ENCODE measurements at regions of chr1 and their contacts with region 1.

Region 1: GRCh38 chr1:241531195-241532161 is 700 bp upstream of the KMO start:
- DNase-seq: no peak
- ATAC-seq: peak; percentile 79
- H3K4me3 ChIP-seq: peak overlapping the region; percentile 54 to 64
- H3K27ac ChIP-seq: no peak overlapping the region
- H3K4me1 ChIP-seq: no peaks in the 10 kb centered on the region
- H3K27me3 ChIP-seq: no peaks in the 10 kb centered on the region

Region 2: DNA sequence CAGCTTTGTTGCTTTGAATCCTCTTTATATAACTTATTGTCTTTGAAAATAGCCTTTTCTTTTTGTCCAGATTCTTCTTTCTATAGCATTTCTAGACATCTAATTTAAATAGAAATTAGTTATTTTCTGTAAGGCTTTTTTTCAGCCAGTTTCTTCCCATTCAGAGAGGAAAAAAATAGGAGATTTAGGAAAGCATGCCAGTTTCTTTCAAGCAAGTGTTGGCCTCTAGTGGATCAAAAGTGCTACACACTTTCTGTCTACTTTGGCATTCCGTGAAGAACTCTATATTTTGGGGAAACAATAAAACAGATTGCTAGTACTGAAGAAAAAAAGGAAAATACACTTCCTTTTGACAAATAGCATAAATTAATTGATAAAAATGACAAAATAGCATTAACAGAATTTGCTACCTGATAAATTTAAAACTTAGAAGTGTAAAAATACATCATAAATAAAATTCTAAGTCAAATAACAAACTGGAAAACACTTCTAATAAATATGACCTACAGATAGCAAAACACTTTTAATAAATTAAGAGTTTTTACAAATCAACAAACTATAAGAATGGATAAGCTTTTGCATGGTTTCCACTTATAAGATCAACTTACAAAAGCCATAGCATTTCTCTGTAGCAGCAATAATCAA is 303.4 kb after region 1 on chr1:
- intact Hi-C with region 1: loop called (anchors 10 kb)
- DNase-seq: no peak
- ATAC-seq: no peak
- H3K4me3 ChIP-seq: no peak overlapping the region
- H3K27ac ChIP-seq: no peak overlapping the region
- H3K4me1 ChIP-seq: no peaks in the 10 kb centered on the region
- H3K27me3 ChIP-seq: no peaks in the 10 kb centered on the region

Region 3: DNA sequence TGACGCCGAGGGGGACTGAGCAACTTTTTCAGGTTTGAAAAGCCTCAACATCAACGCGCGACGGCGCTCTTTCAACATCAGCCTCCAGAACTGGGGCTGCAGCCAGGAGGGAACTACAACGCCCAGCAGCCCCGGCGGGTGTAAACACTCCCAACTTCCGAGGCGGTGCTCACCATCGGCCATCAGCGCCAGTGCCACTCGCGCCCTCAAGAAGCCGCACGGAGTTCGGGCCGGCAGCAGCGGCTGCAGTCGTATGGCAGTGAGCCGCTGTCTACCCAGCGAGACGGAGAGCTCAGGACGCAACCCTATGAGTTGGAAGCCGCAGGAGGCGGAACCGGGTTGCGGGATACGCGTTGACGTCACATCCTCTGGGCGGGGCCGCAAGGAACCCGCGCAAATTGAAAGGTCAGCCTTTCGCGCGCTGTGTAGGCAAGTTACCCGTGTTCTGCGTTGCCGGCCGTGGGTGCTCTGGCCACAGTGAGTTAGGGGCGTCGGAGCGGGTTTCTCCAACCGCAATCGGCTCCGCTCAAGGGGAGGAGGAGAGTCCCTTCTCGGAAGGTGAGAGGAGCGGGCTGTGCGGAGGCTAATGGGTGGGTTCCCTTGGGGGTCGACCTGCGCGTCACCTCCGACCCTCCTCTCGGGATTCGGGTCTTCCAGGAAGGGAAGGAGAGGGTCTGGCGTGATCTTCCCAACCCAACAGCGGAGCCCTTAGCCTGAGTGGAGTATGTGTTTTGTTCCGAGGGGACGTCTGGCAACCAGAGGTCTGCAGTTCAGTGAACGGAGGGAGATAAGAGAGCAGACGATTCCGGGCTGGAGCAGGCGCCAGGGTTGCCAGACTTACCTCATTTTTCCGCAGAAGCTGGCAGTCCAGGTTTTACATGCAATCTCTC is 316.6 kb after region 1 on chr1 and contains the start of gene EXO1:
- intact Hi-C with region 1: loop called in 1 of 2 experiments (anchors 10 kb)
- DNase-seq: peak; percentile 94 to 96
- ATAC-seq: peak; percentile 97
- H3K4me3 ChIP-seq: peak within 1 kb of the TSS; percentile 70 to 78
- H3K27ac ChIP-seq: peak within 1 kb of the TSS; percentile 93 to 100
- H3K4me1 ChIP-seq: peaks cover 0 to 6% of the 10 kb centered on the region in 2 donors
- H3K27me3 ChIP-seq: no peaks in the 10 kb centered on the region
- total RNA-seq, gene EXO1: 0.65 to 1.5 TPM